ENCODE measurements at regions of chr3 and their contacts with region 1.

Region 1: GRCh38 chr3:183385698-183386613 is 42.5 kb downstream of the MCF2L2 start:
- DNase-seq: peak in 1 of 2 donors; percentile 33
- ATAC-seq: peak; percentile 79 to 88
- H3K4me3 ChIP-seq: no peak overlapping the region
- H3K27ac ChIP-seq: no peak overlapping the region
- H3K4me1 ChIP-seq: peaks cover 0 to 2% of the 10 kb centered on the region in 2 donors
- H3K27me3 ChIP-seq: no peaks in the 10 kb centered on the region
- CTCF ChIP-seq: peak; percentile 61 to 81 (median 79)
- POLR2A ChIP-seq: no peak

Region 2: DNA sequence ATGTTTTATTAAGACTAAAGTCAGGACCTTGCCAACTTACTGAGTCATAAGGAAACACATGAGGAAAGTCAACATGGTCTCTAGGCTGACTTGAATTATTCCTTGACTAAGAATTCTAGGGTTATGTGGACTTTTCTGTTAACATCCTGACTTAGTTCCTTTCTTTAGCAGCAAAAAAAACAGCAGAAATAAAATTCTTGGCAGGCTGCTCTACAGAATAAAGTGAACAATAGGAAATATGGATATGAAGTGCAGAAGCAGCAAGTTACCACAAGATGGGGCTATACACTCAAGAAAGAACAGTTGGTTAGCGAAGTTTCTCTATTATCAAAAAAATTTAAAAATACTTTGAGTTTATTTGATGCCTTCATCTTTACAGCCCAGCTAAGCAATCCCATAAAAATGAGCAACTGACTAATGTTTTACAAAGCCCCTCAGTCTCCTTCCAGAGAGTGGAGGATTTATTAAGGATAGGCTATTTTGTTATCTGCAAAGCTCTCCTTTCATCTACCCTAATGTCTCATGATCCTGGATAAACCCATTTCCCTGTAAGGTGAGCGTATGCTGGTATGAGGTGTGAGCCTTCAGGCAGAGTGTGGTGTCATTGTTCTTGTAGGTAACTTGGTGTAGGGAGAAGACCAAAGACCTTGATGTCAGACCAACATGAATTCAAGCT is 263.6 kb before region 1 on chr3:
- in situ Hi-C with region 1: loop called (anchors 5 kb)
- intact Hi-C with region 1: loop called (anchors 1 kb)
- DNase-seq: no peak
- ATAC-seq: peak; percentile 70 to 72
- H3K4me3 ChIP-seq: no peak overlapping the region
- H3K27ac ChIP-seq: no peak overlapping the region
- H3K4me1 ChIP-seq: peaks cover 0 to 2% of the 10 kb centered on the region in 2 donors
- H3K27me3 ChIP-seq: peaks cover 0 to 4% (median 0%) of the 10 kb centered on the region in 3 donors
- CTCF ChIP-seq: peak; percentile 77 to 85 (median 82)
- POLR2A ChIP-seq: no peak

Region 3: GRCh38 chr3:183178629-183179549 is 207.1 kb before region 1 on chr3:
- in situ Hi-C with region 1: no loop called
- intact Hi-C with region 1: loop called (anchors 1 kb)
- DNase-seq: no peak
- ATAC-seq: peak; percentile 27 to 43
- H3K4me3 ChIP-seq: peak overlapping the region; percentile 51 to 79 (median 60)
- H3K27ac ChIP-seq: no peak overlapping the region
- H3K4me1 ChIP-seq: peaks cover 6 to 9% of the 10 kb centered on the region in 2 donors
- H3K27me3 ChIP-seq: peaks cover 22 to 50% (median 32%) of the 10 kb centered on the region in 3 donors
- CTCF ChIP-seq: no peak
- POLR2A ChIP-seq: no peak

Region 4: DNA sequence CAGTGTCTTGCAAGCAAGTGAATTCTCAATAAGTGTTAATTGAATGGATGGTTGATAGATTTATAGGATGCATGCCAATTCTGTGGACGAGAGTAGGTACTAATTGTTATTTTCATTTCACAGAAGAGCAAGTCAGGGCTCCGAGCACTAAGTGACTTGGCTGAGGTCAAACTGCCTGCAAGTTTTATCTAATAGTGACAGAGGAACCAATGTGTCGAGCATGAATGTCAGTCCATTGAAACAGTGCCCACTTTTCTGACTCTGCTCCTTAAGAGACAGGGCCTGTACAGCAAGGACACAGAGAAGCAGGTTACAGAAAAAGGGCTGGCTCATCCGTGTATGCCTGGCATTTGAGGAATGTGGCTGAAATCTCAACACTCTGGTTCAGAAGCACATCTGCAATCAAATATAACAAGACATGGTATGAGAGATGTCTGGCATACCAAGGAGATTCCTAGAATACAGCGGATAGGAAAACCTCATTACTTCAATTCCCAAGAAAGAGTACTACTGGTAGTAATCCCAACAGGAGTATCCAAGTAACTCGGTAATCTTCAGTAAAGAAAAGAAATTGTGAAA is 138.9 kb before region 1 on chr3:
- in situ Hi-C with region 1: loop called in 3 of 4 experiments (anchors 5 to 10 kb)
- intact Hi-C with region 1: no loop called
- DNase-seq: no peak
- ATAC-seq: no peak
- H3K4me3 ChIP-seq: no peak overlapping the region
- H3K27ac ChIP-seq: no peak overlapping the region
- H3K4me1 ChIP-seq: no peaks in the 10 kb centered on the region
- H3K27me3 ChIP-seq: no peaks in the 10 kb centered on the region
- CTCF ChIP-seq: no peak
- POLR2A ChIP-seq: no peak

Region 5: GRCh38 chr3:183306798-183307671 is 78.9 kb before region 1 on chr3:
- in situ Hi-C with region 1: no loop called
- intact Hi-C with region 1: loop called (anchors 2 kb)
- DNase-seq: peak; percentile 71 to 90
- ATAC-seq: peak; percentile 76
- H3K4me3 ChIP-seq: peak overlapping the region in 1 of 4 donors; percentile 21
- H3K27ac ChIP-seq: peak overlapping the region; percentile 89 to 99 (median 93)
- H3K4me1 ChIP-seq: peaks cover 49 to 67% of the 10 kb centered on the region in 2 donors
- H3K27me3 ChIP-seq: no peaks in the 10 kb centered on the region
- CTCF ChIP-seq: no peak
- POLR2A ChIP-seq: peak; percentile 9 to 53

Region 6: GRCh38 chr3:183357564-183358079 is 28.3 kb before region 1 on chr3:
- in situ Hi-C with region 1: no loop called
- intact Hi-C with region 1: no loop called
- DNase-seq: no peak
- ATAC-seq: no peak
- H3K4me3 ChIP-seq: no peak overlapping the region
- H3K27ac ChIP-seq: no peak overlapping the region
- H3K4me1 ChIP-seq: no peaks in the 10 kb centered on the region
- H3K27me3 ChIP-seq: no peaks in the 10 kb centered on the region
- CTCF ChIP-seq: no peak
- POLR2A ChIP-seq: no peak